PC-3 (cell line): ENCODE measurements at regions of chr14 and their contacts with region 1.

Region 1: DNA sequence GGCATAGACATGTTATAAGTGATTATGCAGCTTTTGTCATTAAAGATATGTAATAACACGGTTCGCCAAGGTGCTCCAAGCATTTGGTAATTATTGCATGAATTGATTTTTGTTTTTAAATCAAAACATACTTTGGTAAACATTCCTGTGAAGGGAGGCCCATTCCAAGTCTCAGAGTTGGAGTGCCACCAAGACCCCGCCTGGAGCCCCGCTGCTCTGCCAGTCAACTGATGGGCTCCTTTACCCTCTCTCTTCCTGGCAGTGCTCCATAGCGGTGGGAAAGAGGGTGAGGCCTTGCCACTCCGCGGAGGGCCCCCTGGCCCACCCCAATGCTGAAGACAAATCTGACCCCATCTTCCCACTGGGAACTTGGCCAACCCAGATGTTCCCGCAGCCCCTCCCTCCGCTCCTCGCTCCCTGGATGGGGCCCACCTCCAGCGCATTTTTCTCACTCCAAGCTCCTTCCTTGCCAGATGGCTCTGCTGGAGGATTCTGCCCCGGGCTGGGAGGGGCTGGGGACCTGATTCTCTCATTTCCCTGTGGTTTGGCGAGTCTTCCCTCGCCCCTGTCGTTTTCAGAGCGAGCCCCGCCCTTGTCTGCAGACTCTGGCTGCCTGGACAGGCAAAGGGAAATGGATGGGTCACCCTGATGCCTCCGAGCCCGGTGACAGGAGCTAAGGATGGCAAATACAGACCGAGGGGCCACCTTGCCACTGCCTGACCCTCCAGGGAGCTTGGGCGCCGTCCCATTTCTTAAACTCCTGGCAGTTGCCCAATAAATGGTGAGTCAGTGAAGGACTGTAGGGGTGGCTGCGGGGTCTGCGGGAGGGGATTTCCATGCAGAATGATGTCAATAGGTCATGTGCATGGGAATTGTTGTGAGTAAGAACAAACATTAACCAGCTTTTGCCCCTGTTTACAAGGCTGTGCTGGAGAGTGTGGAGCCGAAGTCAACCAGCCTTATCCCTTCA is 9.2 kb upstream of the PAPLN start:
- DNase-seq: peak; percentile 97
- ATAC-seq: peak; percentile 88
- H3K4me3 ChIP-seq: peak overlapping the region; percentile 40; the same call in 1 of the 2 replicates
- H3K27ac ChIP-seq: peak overlapping the region; percentile 88
- H3K4me1 ChIP-seq: peaks cover 23% of the 10 kb centered on the region
- H3K27me3 ChIP-seq: no peaks in the 10 kb centered on the region
- CTCF ChIP-seq: no peak

Region 2: DNA sequence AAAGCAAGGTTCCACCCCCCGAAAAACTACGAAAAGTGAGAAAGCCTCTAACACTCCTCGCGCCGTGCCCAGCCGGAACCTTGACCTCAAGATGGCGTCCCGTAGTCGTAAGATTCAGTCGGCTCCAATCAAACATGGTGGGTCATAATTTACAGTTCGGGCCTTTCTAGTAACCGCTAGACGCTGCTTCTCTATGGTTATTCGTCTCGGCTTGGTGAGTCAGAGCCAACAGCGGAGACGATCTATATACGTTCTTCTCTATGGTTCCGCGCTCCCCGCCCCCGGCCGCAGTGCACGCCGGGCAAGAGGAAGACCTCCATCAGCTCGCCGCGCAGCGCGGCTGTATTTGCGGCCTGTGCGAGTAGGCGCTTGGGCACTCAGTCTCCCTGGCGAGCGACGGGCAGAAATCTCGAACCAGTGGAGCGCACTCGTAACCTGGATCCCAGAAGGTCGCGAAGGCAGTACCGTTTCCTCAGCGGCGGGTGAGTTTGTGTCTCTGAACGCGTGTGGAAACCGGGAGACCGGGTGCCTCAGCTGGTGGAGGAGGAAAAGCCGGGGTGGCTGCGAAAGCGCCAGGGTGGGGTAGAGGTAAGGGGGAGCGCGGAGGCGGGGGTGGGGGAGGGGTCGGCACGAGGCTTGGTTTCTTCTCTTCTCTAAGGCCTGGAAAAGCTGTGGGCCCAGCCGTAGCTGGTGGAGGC is 169.7 kb before region 1 on chr14 and contains the start of gene RBM25:
- CTCF ChIA-PET with region 1: no interaction called
- POLR2A ChIA-PET with region 1: no interaction called
- intact Hi-C with region 1: no loop called
- DNase-seq: peak; percentile 99
- ATAC-seq: peak; percentile 94
- H3K4me3 ChIP-seq: peak within 1 kb of the TSS; percentile 86
- H3K27ac ChIP-seq: peak within 1 kb of the TSS; percentile 78
- H3K4me1 ChIP-seq: peaks cover 22% of the 10 kb centered on the region
- H3K27me3 ChIP-seq: no peaks in the 10 kb centered on the region
- CTCF ChIP-seq: no peak; the same call in 1 of the 2 replicates
- total RNA-seq, gene RBM25: 53.2 and 64.7 TPM in 2 replicates

Region 3: GRCh38 chr14:73472185-73473114 is 244.4 kb after region 1 on chr14:
- CTCF ChIA-PET with region 1: no interaction called
- POLR2A ChIA-PET with region 1: no interaction called
- intact Hi-C with region 1: loop called (anchors 2 kb)
- DNase-seq: peak; percentile 87
- ATAC-seq: peak; percentile 88
- H3K4me3 ChIP-seq: no peak overlapping the region
- H3K27ac ChIP-seq: no peak overlapping the region
- H3K4me1 ChIP-seq: no peaks in the 10 kb centered on the region
- H3K27me3 ChIP-seq: no peaks in the 10 kb centered on the region
- CTCF ChIP-seq: peak; percentile 89